Naive thymus-derived CD8-positive, alpha-beta T cell (primary cell): ENCODE measurements at regions of chr10 and their contacts with region 1.

Region 1: DNA sequence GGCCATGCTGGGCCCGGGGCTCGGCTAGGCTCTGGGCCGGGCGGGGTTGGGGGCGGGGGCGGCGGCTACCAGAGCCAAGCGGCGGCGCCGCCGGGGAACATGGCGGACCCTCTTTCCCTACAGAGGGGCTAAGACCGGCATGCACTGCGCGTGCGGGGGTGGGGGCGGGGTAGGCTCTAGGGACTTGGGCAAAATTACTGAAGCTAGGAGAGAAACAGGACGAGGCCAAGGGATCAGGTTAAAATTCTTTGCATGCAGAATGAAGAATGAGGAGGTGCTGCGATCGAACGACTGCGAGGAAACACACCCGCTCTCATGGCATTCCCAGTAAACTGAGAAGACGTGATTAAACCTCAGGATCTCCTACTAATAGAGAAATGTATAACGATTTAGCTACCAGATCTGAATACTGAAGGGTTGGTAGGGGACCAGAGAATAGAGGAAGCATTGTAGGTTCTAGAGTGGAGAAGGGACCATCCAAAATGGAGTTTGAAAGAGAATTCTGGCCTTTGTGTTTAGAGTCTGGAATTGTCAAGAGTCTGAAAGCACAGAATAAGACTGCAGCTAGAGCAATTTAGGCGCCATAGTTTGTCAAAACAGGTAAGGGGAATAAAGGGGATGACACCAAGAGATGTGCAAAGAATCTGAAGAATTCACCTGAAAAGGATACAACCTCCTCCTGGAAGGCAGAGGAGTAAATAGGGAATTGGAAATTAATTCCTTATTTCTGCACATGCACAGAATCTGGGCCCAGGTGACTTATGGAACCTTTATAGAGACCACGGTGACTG is at the start of gene PPP3CB:
- DNase-seq: peak in 9 of 10 donors; percentile 78 to 96 (median 86)
- ATAC-seq: peak; percentile 82 to 84
- H3K4me3 Mint-ChIP-seq: peak within 1 kb of the TSS; percentile 82 to 98 (median 95)
- H3K27ac Mint-ChIP-seq: peak within 1 kb of the TSS; percentile 89 to 98 (median 95)
- H3K4me1 Mint-ChIP-seq: peaks cover 26 to 54% (median 51%) of the 10 kb centered on the region in 4 donors
- H3K27me3 Mint-ChIP-seq: no peaks in the 10 kb centered on the region
- polyA plus RNA-seq, gene PPP3CB: 5.0 to 5.8 (median 5.8) TPM

Region 2: GRCh38 chr10:73413528-73414229 is 82.4 kb before region 1 on chr10 and contains the start of gene ANXA7:
- POLR2A ChIA-PET with region 1: interaction called, 27 read pairs
- DNase-seq: peak; percentile 82 to 95 (median 89)
- ATAC-seq: peak; percentile 94 to 96
- H3K4me3 Mint-ChIP-seq: peak within 1 kb of the TSS; percentile 89 to 99 (median 94)
- H3K27ac Mint-ChIP-seq: peak within 1 kb of the TSS; percentile 84 to 96 (median 93)
- H3K4me1 Mint-ChIP-seq: peaks cover 27 to 59% (median 56%) of the 10 kb centered on the region in 4 donors
- H3K27me3 Mint-ChIP-seq: peaks cover 0 to 2% (median 0%) of the 10 kb centered on the region in 5 donors
- polyA plus RNA-seq, gene ANXA7: 168 to 193 (median 179) TPM

Region 3: DNA sequence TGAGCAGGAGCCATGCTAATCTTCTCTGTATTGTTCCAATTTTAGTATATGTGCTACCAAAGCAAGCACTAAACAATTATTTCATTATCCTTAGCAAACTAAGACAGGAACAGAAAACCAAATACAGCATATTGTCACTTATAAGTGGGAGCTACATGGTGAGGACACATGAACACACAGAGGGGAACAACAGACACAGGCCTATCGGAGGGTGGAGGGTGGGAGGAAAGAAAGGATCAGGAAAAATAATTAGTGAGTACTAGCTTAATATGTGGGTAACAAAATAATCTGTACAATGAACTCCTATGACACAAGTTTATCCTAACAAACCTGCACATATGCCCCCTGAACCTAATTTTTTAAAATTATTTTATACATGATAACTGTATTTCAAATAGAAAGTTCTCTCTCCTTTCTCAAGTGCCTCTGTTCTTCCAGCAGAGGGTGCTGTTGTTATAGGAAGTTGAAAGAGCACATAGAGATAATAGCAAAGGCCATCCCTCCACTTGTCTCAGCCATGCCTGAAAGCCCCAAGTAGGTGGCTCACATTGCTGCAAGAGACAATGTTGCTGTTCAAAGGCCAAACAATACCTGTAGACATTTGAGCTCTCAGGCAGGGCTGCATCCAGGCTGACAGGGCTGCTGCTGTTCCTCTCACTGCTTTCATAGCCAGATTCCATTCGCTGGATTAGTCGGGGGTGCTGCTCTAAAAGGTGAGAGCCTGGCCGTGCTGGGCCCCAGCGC is 33.2 kb after region 1 on chr10:
- POLR2A ChIA-PET with region 1: no interaction called
- DNase-seq: peak in 9 of 10 donors; percentile 10 to 80 (median 67)
- ATAC-seq: peak; percentile 93 to 94
- H3K4me3 Mint-ChIP-seq: no peak overlapping the region
- H3K27ac Mint-ChIP-seq: no peak overlapping the region
- H3K4me1 Mint-ChIP-seq: no peaks in the 10 kb centered on the region
- H3K27me3 Mint-ChIP-seq: no peaks in the 10 kb centered on the region

Region 4: DNA sequence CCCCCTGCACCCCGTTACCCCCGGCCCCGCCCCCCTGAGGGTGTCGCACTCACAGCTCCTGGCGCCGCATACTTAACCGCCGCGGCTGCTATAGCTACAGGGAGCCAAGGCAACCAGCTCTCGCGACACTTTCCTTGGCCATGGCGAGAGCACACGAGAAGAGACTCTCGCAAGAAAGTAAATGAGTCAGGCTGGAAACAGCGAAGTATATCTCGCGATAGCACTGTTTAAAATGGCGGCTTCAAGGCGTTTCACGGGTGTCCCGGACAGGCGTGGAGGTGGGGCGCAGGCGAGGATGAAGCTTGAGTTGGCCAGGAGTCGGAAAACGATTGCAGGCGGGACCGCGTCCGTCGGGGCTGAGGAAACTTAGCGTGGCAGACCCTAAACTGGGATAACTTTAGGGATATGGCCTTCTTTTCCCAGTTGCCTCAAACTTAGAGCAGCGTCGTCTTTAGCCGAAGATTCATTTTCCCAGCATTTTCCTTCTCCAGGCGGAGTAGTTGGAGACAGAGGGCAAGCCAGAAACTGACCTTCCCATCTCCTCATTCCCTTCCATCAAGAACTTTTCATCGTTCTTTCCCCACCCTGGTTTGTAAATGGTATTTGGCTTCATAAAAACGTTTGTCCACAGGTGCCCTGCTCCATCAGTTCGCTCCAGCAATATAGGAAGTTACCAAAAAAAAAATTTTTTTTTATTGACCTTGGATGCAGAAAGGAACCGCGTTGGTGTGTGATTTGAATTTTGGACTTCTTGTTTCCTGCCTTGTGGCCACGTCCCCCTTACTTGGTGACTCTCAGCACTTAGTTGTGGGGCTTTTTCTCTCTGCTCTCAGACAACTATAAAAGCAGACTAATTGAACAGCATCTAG is 130.0 kb after region 1 on chr10:
- POLR2A ChIA-PET with region 1: interaction called, 14 read pairs
- DNase-seq: peak; percentile 82 to 97 (median 93)
- ATAC-seq: peak; percentile 91 to 95
- H3K4me3 Mint-ChIP-seq: peak overlapping the region; percentile 92 to 98 (median 96)
- H3K27ac Mint-ChIP-seq: peak overlapping the region; percentile 96 to 100 (median 99)
- H3K4me1 Mint-ChIP-seq: peaks cover 10 to 23% (median 17%) of the 10 kb centered on the region in 4 donors
- H3K27me3 Mint-ChIP-seq: no peaks in the 10 kb centered on the region